Caco-2 (cell line): ENCODE measurements at regions of chr12 and their contacts with region 1.

Region 1: GRCh38 chr12:91717804-91718203 is 427.8 kb downstream of the BTG1 start:
- DNase-seq: no peak
- H3K4me3 ChIP-seq: no peak overlapping the region
- H3K4me3 Mint-ChIP-seq: no peak overlapping the region
- H3K27ac Mint-ChIP-seq: no peak overlapping the region
- H3K4me1 ChIP-seq: no peaks in the 10 kb centered on the region
- H3K4me1 Mint-ChIP-seq: no peaks in the 10 kb centered on the region
- H3K27me3 ChIP-seq: no peaks in the 10 kb centered on the region
- H3K27me3 Mint-ChIP-seq: peaks cover 4% of the 10 kb centered on the region
- CTCF ChIP-seq: no peak

Region 2: DNA sequence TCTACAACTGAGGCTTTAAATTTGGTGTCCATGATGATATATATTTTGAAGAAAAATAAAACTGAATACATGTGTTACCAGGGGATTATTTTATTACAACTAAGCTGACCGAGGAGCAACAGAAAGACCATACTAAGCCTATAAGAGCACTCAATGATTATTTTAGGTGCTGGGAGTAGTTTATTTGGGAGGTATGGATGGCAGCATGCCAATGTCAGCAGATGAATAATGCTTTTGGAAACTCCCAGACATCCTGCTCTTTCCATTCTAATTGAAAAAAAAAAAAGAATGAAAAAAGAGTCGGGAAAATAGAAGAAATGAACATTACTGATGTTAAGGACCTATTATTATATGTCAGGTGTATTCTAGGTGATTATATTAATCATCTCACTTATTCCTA is 13.4 kb before region 1 on chr12:
- CTCF ChIA-PET with region 1: no interaction called
- POLR2A ChIA-PET with region 1: no interaction called
- intact Hi-C with region 1: loop called (anchors 2 kb)
- DNase-seq: no peak
- H3K4me3 ChIP-seq: no peak overlapping the region
- H3K4me3 Mint-ChIP-seq: no peak overlapping the region
- H3K27ac Mint-ChIP-seq: no peak overlapping the region
- H3K4me1 ChIP-seq: no peaks in the 10 kb centered on the region
- H3K4me1 Mint-ChIP-seq: no peaks in the 10 kb centered on the region
- H3K27me3 ChIP-seq: no peaks in the 10 kb centered on the region
- H3K27me3 Mint-ChIP-seq: peaks cover 3% of the 10 kb centered on the region
- CTCF ChIP-seq: no peak